CD4-positive, alpha-beta T cell (primary cell): ENCODE measurements at regions of chr19 and their contacts with region 1.

Region 1: DNA sequence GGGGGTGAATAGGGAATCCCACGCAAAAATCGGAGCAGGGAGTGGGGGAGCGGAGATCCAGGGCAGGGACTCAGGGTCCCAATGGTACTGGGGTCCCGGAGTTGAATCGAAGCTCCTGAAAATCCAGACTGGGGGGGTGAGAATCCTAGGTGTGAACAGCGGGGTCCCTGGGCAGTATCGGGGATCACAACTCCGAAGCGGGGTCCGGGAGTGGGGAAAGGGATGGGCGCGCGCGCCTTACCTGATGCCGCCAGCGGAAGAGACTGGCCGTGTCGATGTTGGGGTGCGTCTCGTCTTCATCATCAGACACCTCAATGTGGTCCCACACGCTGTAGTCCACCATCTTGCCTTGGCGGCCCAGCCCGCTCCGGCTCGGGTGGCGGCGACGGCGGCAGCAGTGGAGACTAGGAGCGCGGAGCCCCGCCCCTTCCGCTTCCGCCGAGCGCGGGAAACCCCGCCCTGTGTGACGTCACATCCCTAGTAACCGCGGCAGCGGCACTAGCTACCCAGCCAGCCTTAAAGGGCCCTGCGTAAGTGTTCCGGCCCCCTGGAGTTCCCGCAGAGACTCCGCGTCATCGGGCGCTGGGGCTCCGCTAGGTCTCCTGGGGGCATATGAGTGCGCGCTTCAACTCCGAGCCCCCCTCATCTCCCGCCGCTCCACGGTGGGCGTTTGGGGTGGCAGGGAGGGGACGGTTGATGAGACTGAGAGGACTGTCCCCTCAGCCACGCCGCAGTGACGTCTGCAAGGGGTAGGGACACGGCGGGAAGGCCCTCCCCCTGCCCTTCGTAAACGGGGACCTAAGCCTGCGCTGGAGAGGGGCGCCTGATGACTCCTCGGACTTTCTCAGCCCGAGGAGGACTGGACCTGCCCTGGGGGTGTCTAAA is at the start of gene CDC37:
- DNase-seq: peak; percentile 95 to 99 (median 98)
- ATAC-seq: peak; percentile 74
- H3K4me3 ChIP-seq: peak within 1 kb of the TSS; percentile 96
- H3K4me3 Mint-ChIP-seq: peak within 1 kb of the TSS; percentile 98
- H3K27ac ChIP-seq: peak within 1 kb of the TSS; percentile 85 to 88
- H3K27ac Mint-ChIP-seq: peak within 1 kb of the TSS; percentile 97
- H3K4me1 ChIP-seq: peaks cover 82% of the 10 kb centered on the region
- H3K4me1 Mint-ChIP-seq: peaks cover 73% of the 10 kb centered on the region
- H3K27me3 ChIP-seq: no peaks in the 10 kb centered on the region
- H3K27me3 Mint-ChIP-seq: peaks cover 3% of the 10 kb centered on the region
- CTCF ChIP-seq: no peak
- total RNA-seq, gene CDC37: 162 to 164 TPM

Region 2: DNA sequence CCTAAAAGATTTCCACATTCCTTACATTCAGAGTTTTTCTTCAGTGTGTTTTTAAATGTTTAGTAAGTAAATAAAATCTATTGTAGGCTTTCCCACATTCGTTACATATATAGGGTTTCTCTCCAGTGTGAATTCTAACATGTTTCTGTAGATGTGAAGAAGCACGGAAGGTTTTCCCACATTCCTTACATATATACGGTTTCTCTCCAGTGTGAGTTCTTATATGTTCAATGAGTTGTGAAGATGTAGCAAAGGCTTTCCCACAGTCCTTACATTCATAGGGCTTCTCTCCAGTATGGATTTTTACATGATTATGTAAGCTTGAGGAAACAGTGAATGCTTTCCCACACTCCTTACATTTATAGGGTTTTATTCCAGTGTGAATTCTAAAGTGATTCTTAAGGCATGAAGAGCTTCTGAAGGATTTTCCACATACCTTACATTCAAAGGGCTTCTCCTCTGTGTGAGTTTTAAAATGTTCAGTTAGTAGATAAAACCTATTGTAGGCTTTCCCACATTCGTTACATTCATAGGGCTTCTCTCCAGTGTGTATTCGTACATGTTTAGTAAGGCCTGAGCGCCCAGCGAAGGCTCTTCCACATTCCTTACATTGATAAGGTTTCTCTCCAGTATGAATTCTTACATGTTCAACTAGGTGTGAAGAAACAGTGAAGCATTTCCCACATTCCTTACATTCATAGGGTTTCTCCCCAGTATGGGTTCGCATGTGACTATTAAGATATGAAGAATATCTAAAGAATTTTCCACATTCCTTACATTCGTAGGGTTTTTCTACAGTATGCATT is 837.3 kb before region 1 on chr19:
- CTCF ChIA-PET with region 1: no interaction called
- POLR2A ChIA-PET with region 1: no interaction called
- intact Hi-C with region 1: no loop called
- DNase-seq: no peak
- ATAC-seq: no peak
- H3K4me3 ChIP-seq: no peak overlapping the region
- H3K4me3 Mint-ChIP-seq: no peak overlapping the region
- H3K27ac ChIP-seq: no peak overlapping the region
- H3K27ac Mint-ChIP-seq: peak overlapping the region; percentile 5
- H3K4me1 ChIP-seq: no peaks in the 10 kb centered on the region
- H3K4me1 Mint-ChIP-seq: peaks cover 1% of the 10 kb centered on the region
- H3K27me3 ChIP-seq: no peaks in the 10 kb centered on the region
- H3K27me3 Mint-ChIP-seq: no peaks in the 10 kb centered on the region
- CTCF ChIP-seq: no peak

Region 3: GRCh38 chr19:10106100-10106936 is 297.1 kb before region 1 on chr19 and contains the start of gene PPAN:
- CTCF ChIA-PET with region 1: no interaction called
- POLR2A ChIA-PET with region 1: interaction called, 4 read pairs
- intact Hi-C with region 1: loop called in 1 of 2 experiments (anchors 10 kb)
- DNase-seq: peak; percentile 94 to 100 (median 98)
- ATAC-seq: peak; percentile 59
- H3K4me3 ChIP-seq: peak within 1 kb of the TSS; percentile 73
- H3K4me3 Mint-ChIP-seq: peak within 1 kb of the TSS; percentile 93
- H3K27ac ChIP-seq: peak within 1 kb of the TSS; percentile 94 to 98
- H3K27ac Mint-ChIP-seq: peak within 1 kb of the TSS; percentile 95
- H3K4me1 ChIP-seq: peaks cover 86% of the 10 kb centered on the region
- H3K4me1 Mint-ChIP-seq: peaks cover 58% of the 10 kb centered on the region
- H3K27me3 ChIP-seq: no peaks in the 10 kb centered on the region
- H3K27me3 Mint-ChIP-seq: no peaks in the 10 kb centered on the region
- CTCF ChIP-seq: no peak
- total RNA-seq, gene PPAN: 119 to 127 TPM

Region 4: GRCh38 chr19:10332955-10333757 is 70.2 kb before region 1 on chr19 and contains the start of gene RAVER1:
- CTCF ChIA-PET with region 1: no interaction called
- POLR2A ChIA-PET with region 1: no interaction called
- intact Hi-C with region 1: loop called in 1 of 2 experiments (anchors 1 kb)
- DNase-seq: peak; percentile 96 to 100 (median 98)
- ATAC-seq: peak; percentile 96
- H3K4me3 ChIP-seq: peak within 1 kb of the TSS; percentile 91
- H3K4me3 Mint-ChIP-seq: peak within 1 kb of the TSS; percentile 96
- H3K27ac ChIP-seq: peak within 1 kb of the TSS; percentile 87 to 91
- H3K27ac Mint-ChIP-seq: peak within 1 kb of the TSS; percentile 92
- H3K4me1 ChIP-seq: peaks cover 54% of the 10 kb centered on the region
- H3K4me1 Mint-ChIP-seq: peaks cover 23% of the 10 kb centered on the region
- H3K27me3 ChIP-seq: no peaks in the 10 kb centered on the region
- H3K27me3 Mint-ChIP-seq: no peaks in the 10 kb centered on the region
- CTCF ChIP-seq: no peak
- total RNA-seq, gene RAVER1: 20.5 to 21.3 TPM

Region 5: GRCh38 chr19:10416380-10417257 is 13.2 kb after region 1 on chr19:
- CTCF ChIA-PET with region 1: interaction called, 129 read pairs
- POLR2A ChIA-PET with region 1: interaction called, 27 read pairs
- intact Hi-C with region 1: loop called (anchors 1 kb)
- DNase-seq: peak; percentile 70 to 99 (median 90)
- ATAC-seq: peak; percentile 69
- H3K4me3 ChIP-seq: peak overlapping the region; percentile 52
- H3K4me3 Mint-ChIP-seq: peak overlapping the region; percentile 76
- H3K27ac ChIP-seq: peak overlapping the region; percentile 31 to 34
- H3K27ac Mint-ChIP-seq: peak overlapping the region; percentile 79
- H3K4me1 ChIP-seq: peaks cover 76% of the 10 kb centered on the region
- H3K4me1 Mint-ChIP-seq: peaks cover 49% of the 10 kb centered on the region
- H3K27me3 ChIP-seq: peaks cover 40 to 44% of the 10 kb centered on the region in 2 experiments
- H3K27me3 Mint-ChIP-seq: peaks cover 42% of the 10 kb centered on the region
- CTCF ChIP-seq: peak; percentile 98

Region 6: GRCh38 chr19:10431943-10432735 is 28.8 kb after region 1 on chr19:
- CTCF ChIA-PET with region 1: interaction called, 21 read pairs
- POLR2A ChIA-PET with region 1: interaction called, 6 read pairs
- intact Hi-C with region 1: loop called (anchors 1 kb)
- DNase-seq: peak; percentile 43 to 87 (median 62)
- ATAC-seq: peak; percentile 39
- H3K4me3 ChIP-seq: peak overlapping the region; percentile 53
- H3K4me3 Mint-ChIP-seq: peak overlapping the region; percentile 85
- H3K27ac ChIP-seq: peak overlapping the region in 1 of 2 donors; percentile 79
- H3K27ac Mint-ChIP-seq: peak overlapping the region; percentile 87
- H3K4me1 ChIP-seq: peaks cover 64% of the 10 kb centered on the region
- H3K4me1 Mint-ChIP-seq: peaks cover 49% of the 10 kb centered on the region
- H3K27me3 ChIP-seq: peaks cover 17 to 19% of the 10 kb centered on the region in 2 experiments
- H3K27me3 Mint-ChIP-seq: peaks cover 51% of the 10 kb centered on the region
- CTCF ChIP-seq: no peak

Region 7: GRCh38 chr19:10565567-10566407 is 162.4 kb after region 1 on chr19 and contains the start of gene KRI1:
- CTCF ChIA-PET with region 1: no interaction called
- POLR2A ChIA-PET with region 1: no interaction called
- intact Hi-C with region 1: loop called (anchors 5 kb)
- DNase-seq: peak; percentile 97 to 100 (median 99)
- ATAC-seq: peak; percentile 52
- H3K4me3 ChIP-seq: peak within 1 kb of the TSS; percentile 87
- H3K4me3 Mint-ChIP-seq: peak within 1 kb of the TSS; percentile 93
- H3K27ac ChIP-seq: peak within 1 kb of the TSS; percentile 80 to 94
- H3K27ac Mint-ChIP-seq: peak within 1 kb of the TSS; percentile 95
- H3K4me1 ChIP-seq: peaks cover 56% of the 10 kb centered on the region
- H3K4me1 Mint-ChIP-seq: peaks cover 46% of the 10 kb centered on the region
- H3K27me3 ChIP-seq: no peaks in the 10 kb centered on the region
- H3K27me3 Mint-ChIP-seq: no peaks in the 10 kb centered on the region
- CTCF ChIP-seq: no peak
- total RNA-seq, gene KRI1: 36.8 to 39.6 TPM